ENCODE measurements at regions of chr3 and their contacts with region 1.

Region 1: DNA sequence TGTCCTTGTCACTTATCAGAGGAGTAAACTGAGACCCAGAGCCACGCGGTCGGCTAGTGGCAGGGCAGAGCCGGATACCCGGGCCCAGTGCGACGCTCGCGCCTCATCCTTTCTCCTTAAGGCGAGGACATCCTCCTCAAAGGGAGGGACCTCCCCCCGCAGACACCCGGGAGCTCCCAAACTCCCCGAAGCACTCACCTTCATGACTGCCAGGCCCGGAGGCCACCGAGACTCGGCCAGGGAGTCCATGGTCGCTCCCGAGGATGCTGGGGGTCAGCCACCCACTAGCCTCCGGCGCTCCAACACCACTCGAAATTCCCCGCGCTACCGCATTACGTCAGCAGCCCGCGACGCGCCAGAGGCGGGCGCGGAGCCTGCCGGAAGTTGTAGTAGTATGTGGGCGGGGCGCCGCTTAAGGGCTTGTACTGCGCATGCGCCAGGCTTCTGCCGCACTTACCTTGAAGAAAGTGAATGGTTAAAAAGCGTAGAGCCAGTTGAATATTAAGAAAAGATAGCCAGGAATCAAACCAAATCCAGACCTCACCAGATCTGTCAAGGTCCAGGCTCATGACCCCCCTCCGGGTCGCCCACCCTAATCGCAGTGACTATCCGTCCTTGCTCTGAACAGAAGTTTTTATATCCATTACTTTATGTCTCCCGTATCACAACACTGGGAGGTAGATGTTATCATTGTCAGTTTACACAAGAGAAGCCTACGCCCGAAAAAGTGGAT is at the start of gene RAD18:
- DNase-seq: peak; percentile 97
- ATAC-seq: peak; percentile 54
- H3K4me3 ChIP-seq: peak within 1 kb of the TSS; percentile 94
- H3K27ac ChIP-seq: peak within 1 kb of the TSS; percentile 94
- H3K4me1 ChIP-seq: peaks cover 42% of the 10 kb centered on the region
- H3K27me3 ChIP-seq: no peaks in the 10 kb centered on the region
- CTCF ChIP-seq: no peak
- total RNA-seq, gene RAD18: 22.8 and 46.6 TPM in 2 replicates

Region 2: GRCh38 chr3:8450621-8451020 is 512.7 kb before region 1 on chr3:
- CTCF ChIA-PET with region 1: no interaction called
- POLR2A ChIA-PET with region 1: no interaction called
- intact Hi-C with region 1: no loop called
- DNase-seq: no peak
- ATAC-seq: no peak
- H3K4me3 ChIP-seq: no peak overlapping the region
- H3K27ac ChIP-seq: no peak overlapping the region
- H3K4me1 ChIP-seq: peaks cover 19% of the 10 kb centered on the region
- H3K27me3 ChIP-seq: no peaks in the 10 kb centered on the region
- CTCF ChIP-seq: no peak; the same call in 1 of the 2 replicates

Region 3: GRCh38 chr3:8678751-8679150 is 284.6 kb before region 1 on chr3:
- CTCF ChIA-PET with region 1: no interaction called
- POLR2A ChIA-PET with region 1: no interaction called
- intact Hi-C with region 1: loop called (anchors 10 kb)
- DNase-seq: no peak
- ATAC-seq: no peak
- H3K4me3 ChIP-seq: no peak overlapping the region
- H3K27ac ChIP-seq: no peak overlapping the region
- H3K4me1 ChIP-seq: peaks cover 32% of the 10 kb centered on the region
- H3K27me3 ChIP-seq: no peaks in the 10 kb centered on the region
- CTCF ChIP-seq: no peak

Region 4: GRCh38 chr3:8741581-8742261 is 221.6 kb before region 1 on chr3:
- CTCF ChIA-PET with region 1: interaction called, 4 read pairs
- POLR2A ChIA-PET with region 1: no interaction called
- intact Hi-C with region 1: loop called (anchors 1 kb)
- DNase-seq: peak; percentile 98
- ATAC-seq: peak; percentile 76
- H3K4me3 ChIP-seq: peak overlapping the region; percentile 45
- H3K27ac ChIP-seq: peak overlapping the region; percentile 91
- H3K4me1 ChIP-seq: peaks cover 51% of the 10 kb centered on the region
- H3K27me3 ChIP-seq: no peaks in the 10 kb centered on the region
- CTCF ChIP-seq: no peak

Region 5: DNA sequence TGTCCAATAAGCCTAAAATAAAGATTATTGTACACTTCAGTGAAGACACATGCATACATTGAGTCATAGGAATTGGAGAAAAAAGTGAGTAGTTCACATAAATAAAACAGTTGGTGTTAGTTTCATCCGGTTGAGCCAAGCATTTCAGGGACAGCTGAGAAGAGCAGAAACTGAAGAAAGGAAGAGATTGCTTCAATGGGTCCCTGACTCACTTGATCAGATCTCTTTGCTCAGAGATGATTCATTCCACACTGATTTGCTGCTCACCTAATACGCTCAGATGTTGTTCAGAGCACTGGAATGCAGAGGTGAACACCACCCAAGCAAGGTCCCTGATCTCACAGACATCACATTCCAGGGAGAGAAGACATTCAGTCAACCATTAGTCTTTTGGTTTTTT is 93.7 kb before region 1 on chr3:
- CTCF ChIA-PET with region 1: no interaction called
- POLR2A ChIA-PET with region 1: no interaction called
- intact Hi-C with region 1: loop called (anchors 1 kb)
- DNase-seq: peak; percentile 99
- ATAC-seq: peak; percentile 95
- H3K4me3 ChIP-seq: no peak overlapping the region
- H3K27ac ChIP-seq: peak overlapping the region; percentile 94
- H3K4me1 ChIP-seq: peaks cover 57% of the 10 kb centered on the region
- H3K27me3 ChIP-seq: no peaks in the 10 kb centered on the region
- CTCF ChIP-seq: no peak

Region 6: DNA sequence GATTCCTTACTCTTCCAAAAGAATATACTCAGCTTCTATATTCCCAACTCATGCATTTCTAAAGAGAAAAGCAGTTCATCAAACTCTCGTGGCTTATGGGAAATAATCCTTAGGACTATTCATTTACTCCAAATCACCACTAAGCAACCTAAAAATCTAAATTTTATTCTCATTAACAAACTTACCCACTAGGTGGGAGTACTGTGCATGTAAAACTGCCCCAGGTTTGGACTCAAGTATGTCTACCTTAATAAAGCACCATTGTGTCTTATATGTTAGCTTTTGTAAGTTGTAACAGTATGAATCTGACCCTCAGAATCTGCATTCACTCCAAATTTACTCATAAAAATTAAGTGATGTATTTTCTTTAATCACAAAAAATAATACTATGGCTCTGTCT is 25.3 kb before region 1 on chr3:
- CTCF ChIA-PET with region 1: interaction called, 3 read pairs
- POLR2A ChIA-PET with region 1: interaction called, 5 read pairs
- intact Hi-C with region 1: loop called (anchors 1 kb)
- DNase-seq: peak; percentile 66
- ATAC-seq: peak; percentile 52
- H3K4me3 ChIP-seq: peak overlapping the region; percentile 29; the same call in 1 of the 2 replicates
- H3K27ac ChIP-seq: peak overlapping the region; percentile 81
- H3K4me1 ChIP-seq: peaks cover 29% of the 10 kb centered on the region
- H3K27me3 ChIP-seq: no peaks in the 10 kb centered on the region
- CTCF ChIP-seq: peak; percentile 75

Region 7: DNA sequence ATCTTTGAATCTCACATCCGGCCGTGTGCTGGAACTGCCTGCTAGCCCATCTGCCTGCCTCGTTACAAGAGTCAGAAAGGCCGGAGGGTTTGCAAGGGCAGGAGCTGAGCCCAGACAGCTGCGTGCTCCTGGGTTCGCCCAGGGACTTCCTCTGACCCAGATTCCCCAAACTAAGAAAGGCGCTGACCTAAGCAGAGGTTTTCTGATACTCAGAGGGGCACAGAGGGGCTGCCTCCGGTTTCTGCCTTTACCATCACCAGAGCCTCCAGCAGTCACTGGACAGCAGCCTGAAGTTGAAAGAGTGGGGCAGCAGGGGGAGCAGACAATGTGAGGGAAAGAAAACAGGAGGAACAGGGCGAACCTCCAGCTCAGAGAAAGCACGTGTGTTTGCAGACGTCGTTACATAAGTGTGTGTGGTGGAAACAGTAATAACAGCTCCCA is 33.4 kb after region 1 on chr3:
- CTCF ChIA-PET with region 1: no interaction called
- POLR2A ChIA-PET with region 1: no interaction called
- intact Hi-C with region 1: no loop called
- DNase-seq: no peak
- ATAC-seq: no peak
- H3K4me3 ChIP-seq: no peak overlapping the region
- H3K27ac ChIP-seq: no peak overlapping the region
- H3K4me1 ChIP-seq: no peaks in the 10 kb centered on the region
- H3K27me3 ChIP-seq: no peaks in the 10 kb centered on the region
- CTCF ChIP-seq: no peak; the same call in 1 of the 2 replicates

Region 8: GRCh38 chr3:9396700-9397521 is 433.6 kb after region 1 on chr3:
- CTCF ChIA-PET with region 1: no interaction called
- POLR2A ChIA-PET with region 1: interaction called, 3 read pairs
- intact Hi-C with region 1: loop called (anchors 2 kb)
- DNase-seq: peak; percentile 99
- ATAC-seq: peak; percentile 75
- H3K4me3 ChIP-seq: peak overlapping the region; percentile 80
- H3K27ac ChIP-seq: peak overlapping the region; percentile 92
- H3K4me1 ChIP-seq: peaks cover 54% of the 10 kb centered on the region
- H3K27me3 ChIP-seq: no peaks in the 10 kb centered on the region
- CTCF ChIP-seq: no peak

Region 9: GRCh38 chr3:9731206-9732079 is 768.1 kb after region 1 on chr3 and contains the start of gene BRPF1:
- CTCF ChIA-PET with region 1: no interaction called
- POLR2A ChIA-PET with region 1: no interaction called
- intact Hi-C with region 1: loop called (anchors 5 kb)
- DNase-seq: peak; percentile 98
- ATAC-seq: peak; percentile 96
- H3K4me3 ChIP-seq: peak within 1 kb of the TSS; percentile 89
- H3K27ac ChIP-seq: peak within 1 kb of the TSS; percentile 92
- H3K4me1 ChIP-seq: peaks cover 23% of the 10 kb centered on the region
- H3K27me3 ChIP-seq: no peaks in the 10 kb centered on the region
- CTCF ChIP-seq: no peak
- total RNA-seq, gene BRPF1: 27.0 and 29.8 TPM in 2 replicates